ENCODE measurements at regions of chr5 and their contacts with region 1.

Region 1: GRCh38 chr5:173331956-173332479 is 3.8 kb upstream of the STC2 start:
- DNase-seq: peak; percentile 84
- H3K4me3 Mint-ChIP-seq: peak overlapping the region; percentile 23
- H3K27ac Mint-ChIP-seq: peak overlapping the region; percentile 48
- H3K4me1 Mint-ChIP-seq: peaks cover 27% of the 10 kb centered on the region
- H3K27me3 Mint-ChIP-seq: peaks cover 7% of the 10 kb centered on the region

Region 2: GRCh38 chr5:172714491-172715421 is 617.3 kb before region 1 on chr5:
- intact Hi-C with region 1: loop called (anchors 5 kb)
- DNase-seq: peak; percentile 48
- H3K4me3 Mint-ChIP-seq: no peak overlapping the region
- H3K27ac Mint-ChIP-seq: no peak overlapping the region
- H3K4me1 Mint-ChIP-seq: peaks cover 2% of the 10 kb centered on the region
- H3K27me3 Mint-ChIP-seq: no peaks in the 10 kb centered on the region

Region 3: GRCh38 chr5:172958331-172959046 is 373.5 kb before region 1 on chr5:
- intact Hi-C with region 1: loop called (anchors 1 kb)
- DNase-seq: peak; percentile 54
- H3K4me3 Mint-ChIP-seq: peak overlapping the region; percentile 92
- H3K27ac Mint-ChIP-seq: peak overlapping the region; percentile 95
- H3K4me1 Mint-ChIP-seq: peaks cover 13% of the 10 kb centered on the region
- H3K27me3 Mint-ChIP-seq: peaks cover 2% of the 10 kb centered on the region

Region 4: DNA sequence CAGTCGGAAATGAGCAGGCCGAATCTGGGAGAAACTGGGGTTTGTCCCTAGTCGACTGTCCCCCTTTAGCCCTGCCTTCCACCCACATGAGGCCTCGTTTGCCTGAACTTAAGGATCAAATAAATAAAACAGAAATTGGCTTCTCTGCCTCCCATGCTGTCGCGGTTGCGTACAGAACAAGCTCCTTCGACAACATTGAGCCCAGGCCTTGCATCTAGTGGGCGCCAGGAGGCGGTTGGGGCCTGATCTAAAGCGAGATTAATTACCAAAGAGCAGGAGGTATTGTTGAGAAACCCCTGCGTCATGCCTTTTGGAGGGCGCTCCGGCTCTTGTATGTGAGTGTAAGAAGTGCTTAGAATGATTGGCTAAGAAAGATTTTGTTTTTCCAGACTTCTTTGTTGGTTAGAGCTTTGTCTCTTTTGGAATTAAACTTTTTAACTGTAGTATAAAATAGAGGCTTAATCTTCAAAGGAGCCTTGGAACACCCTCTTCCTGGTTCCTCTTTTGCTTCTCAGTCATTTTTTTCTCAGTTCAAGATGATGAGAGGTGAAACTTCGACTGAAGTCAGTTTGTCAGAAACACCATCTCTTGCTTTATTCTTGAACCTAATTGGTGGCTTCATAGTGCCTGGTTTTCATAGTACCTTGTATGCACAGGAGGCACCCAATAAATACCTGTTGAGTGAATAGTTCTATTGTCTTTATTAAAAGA is 347.6 kb before region 1 on chr5:
- intact Hi-C with region 1: loop called (anchors 2 kb)
- DNase-seq: peak; percentile 71
- H3K4me3 Mint-ChIP-seq: peak overlapping the region; percentile 98
- H3K27ac Mint-ChIP-seq: peak overlapping the region; percentile 99
- H3K4me1 Mint-ChIP-seq: peaks cover 18% of the 10 kb centered on the region
- H3K27me3 Mint-ChIP-seq: no peaks in the 10 kb centered on the region

Region 5: GRCh38 chr5:173144200-173145176 is 187.5 kb before region 1 on chr5 and contains the start of gene BNIP1:
- intact Hi-C with region 1: loop called (anchors 5 kb)
- DNase-seq: peak; percentile 91
- H3K4me3 Mint-ChIP-seq: peak within 1 kb of the TSS; percentile 95
- H3K27ac Mint-ChIP-seq: peak within 1 kb of the TSS; percentile 98
- H3K4me1 Mint-ChIP-seq: peaks cover 5% of the 10 kb centered on the region
- H3K27me3 Mint-ChIP-seq: no peaks in the 10 kb centered on the region
- total RNA-seq, gene BNIP1: 22.6 and 23.2 TPM in 2 replicates

Region 6: GRCh38 chr5:173238312-173239232 is 93.4 kb before region 1 on chr5:
- intact Hi-C with region 1: loop called (anchors 5 kb)
- DNase-seq: no peak
- H3K4me3 Mint-ChIP-seq: no peak overlapping the region
- H3K27ac Mint-ChIP-seq: no peak overlapping the region
- H3K4me1 Mint-ChIP-seq: peaks cover 7% of the 10 kb centered on the region
- H3K27me3 Mint-ChIP-seq: peaks cover 92% of the 10 kb centered on the region

Region 7: GRCh38 chr5:173293817-173294672 is 38.0 kb before region 1 on chr5:
- intact Hi-C with region 1: loop called (anchors 1 kb)
- DNase-seq: peak; percentile 57
- H3K4me3 Mint-ChIP-seq: peak overlapping the region; percentile 3
- H3K27ac Mint-ChIP-seq: no peak overlapping the region
- H3K4me1 Mint-ChIP-seq: peaks cover 12% of the 10 kb centered on the region
- H3K27me3 Mint-ChIP-seq: peaks cover 51% of the 10 kb centered on the region